BJ (cell line): ENCODE measurements at regions of chr2 and their contacts with region 1.

Region 1: DNA sequence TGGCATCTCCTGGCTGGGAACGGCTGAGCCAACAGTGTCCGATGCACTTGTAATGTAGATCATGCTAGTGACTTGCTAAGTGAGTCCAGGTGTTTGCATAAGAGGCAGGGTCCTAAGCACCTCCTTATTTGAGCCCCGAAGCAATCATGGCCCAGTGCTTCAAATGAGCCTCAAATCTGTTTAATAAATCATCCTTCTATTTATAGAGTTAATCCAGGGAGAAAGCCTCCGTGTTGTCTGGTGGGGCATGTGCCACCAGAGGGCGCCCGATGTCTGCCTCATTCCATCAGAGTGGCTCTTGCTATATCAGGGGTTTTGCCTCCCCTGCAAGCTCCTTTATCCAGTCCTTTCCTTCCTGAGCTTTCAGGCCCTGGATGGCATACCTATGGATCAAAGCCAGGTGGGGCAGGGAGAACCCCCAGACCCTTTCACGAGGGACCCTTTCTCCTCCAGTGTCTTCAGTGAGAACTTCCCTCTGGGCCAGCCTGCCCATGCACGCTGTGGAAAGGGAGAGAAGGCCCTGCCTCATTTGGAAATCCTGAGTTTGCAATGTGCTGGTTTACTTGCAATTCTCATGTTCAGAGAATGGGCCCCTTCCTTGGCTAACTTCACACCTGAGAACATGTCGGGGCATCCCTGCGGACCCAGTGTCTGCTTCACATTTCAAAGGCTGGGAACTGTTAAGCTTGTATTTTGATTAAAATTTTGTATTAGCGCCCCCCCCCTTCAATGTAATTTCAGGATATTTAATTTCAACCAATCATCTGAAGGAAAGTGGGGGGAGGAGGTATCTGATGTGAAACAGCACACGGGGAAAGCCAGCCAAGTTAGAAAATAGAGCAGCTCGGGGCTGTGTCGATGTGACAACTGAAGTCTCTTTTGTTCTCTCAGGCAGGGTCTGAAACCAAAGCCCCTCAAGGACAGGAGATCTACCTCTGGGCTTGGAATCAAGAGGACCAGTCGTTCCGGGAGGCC is 39.7 kb downstream of the RDH14 start:
- DNase-seq: no peak
- H3K4me3 ChIP-seq: no peak overlapping the region
- H3K27me3 ChIP-seq: no peaks in the 10 kb centered on the region
- CTCF ChIP-seq: peak; percentile 91

Region 2: DNA sequence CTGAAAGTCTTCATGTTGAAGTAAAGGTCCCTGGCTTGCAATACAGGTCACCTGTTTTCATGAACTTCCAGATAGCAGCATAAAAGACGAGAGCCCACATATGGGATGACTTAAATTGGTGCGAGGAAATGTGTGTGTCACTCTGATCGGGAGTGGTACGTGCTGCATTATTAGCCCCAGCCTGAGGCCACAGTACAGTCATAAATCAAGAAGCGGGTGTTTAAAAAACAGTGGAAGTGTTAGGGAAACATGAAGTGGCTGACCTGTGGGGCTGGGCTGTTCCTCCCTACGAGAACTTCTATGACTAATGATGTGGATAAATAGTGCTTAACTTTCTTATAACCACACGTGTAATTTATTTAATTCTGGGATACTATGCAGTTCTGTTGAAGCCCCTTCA is 15.4 kb after region 1 on chr2:
- CTCF ChIA-PET with region 1: interaction called, 36 read pairs
- POLR2A ChIA-PET with region 1: no interaction called
- DNase-seq: no peak
- H3K4me3 ChIP-seq: no peak overlapping the region
- H3K27me3 ChIP-seq: no peaks in the 10 kb centered on the region
- CTCF ChIP-seq: no peak

Region 3: DNA sequence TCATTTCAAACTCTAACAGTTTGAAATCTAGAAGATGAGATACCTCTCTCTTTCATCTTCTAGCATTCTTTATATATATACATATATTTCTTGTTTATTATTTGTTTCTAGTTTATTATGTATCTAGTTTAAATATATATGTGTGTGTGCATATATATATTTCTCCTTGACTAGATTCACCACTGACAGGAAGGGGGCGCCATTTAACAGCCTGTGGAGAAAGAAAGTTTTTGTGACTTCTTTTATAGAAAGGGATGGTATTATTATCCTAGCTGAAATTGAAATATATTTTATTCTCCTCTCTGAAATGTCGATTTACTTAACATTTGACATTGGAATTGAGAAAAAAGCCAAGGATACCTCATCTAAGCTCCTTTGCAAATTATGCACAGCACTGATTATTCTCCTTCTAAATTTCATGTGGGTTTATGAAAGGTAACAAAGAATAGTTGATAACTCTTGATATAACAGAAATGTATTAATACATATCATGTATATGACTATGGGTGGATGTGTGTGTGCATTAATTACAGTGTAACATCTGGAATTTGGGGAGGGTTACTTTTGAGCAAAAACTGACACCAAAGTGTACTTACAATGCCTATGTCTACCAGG is 229.3 kb after region 1 on chr2:
- CTCF ChIA-PET with region 1: interaction called, 48 read pairs
- POLR2A ChIA-PET with region 1: interaction called, 3 read pairs
- DNase-seq: no peak
- H3K4me3 ChIP-seq: no peak overlapping the region
- H3K27me3 ChIP-seq: no peaks in the 10 kb centered on the region
- CTCF ChIP-seq: peak; percentile 72

Region 4: GRCh38 chr2:19369341-19369955 is 848.7 kb after region 1 on chr2:
- CTCF ChIA-PET with region 1: interaction called, 13 read pairs
- POLR2A ChIA-PET with region 1: no interaction called
- DNase-seq: no peak
- H3K4me3 ChIP-seq: no peak overlapping the region
- H3K27me3 ChIP-seq: peaks cover 7% of the 10 kb centered on the region
- CTCF ChIP-seq: peak; percentile 62